Activated T-helper 2 cell treated with anti-CD3 and anti-CD28 coated beads, Interferon-gamma antibody, Interleukin-2, Interleukin-4, amounts not matched to agents 10 μg/mL and 5 μg/mL and 100 μg/mL, durations not matched to agents 14 hours and 24 hours and 36 hours (primary cell): ENCODE measurements at regions of chr10 and their contacts with region 1.

Region 1: GRCh38 chr10:33155720-33156638 is 178.5 kb downstream of the NRP1 start:
- DNase-seq: no peak
- H3K4me3 Mint-ChIP-seq: no peak overlapping the region
- H3K27ac Mint-ChIP-seq: peak overlapping the region; percentile 44
- H3K4me1 Mint-ChIP-seq: peaks cover 43% of the 10 kb centered on the region
- H3K27me3 Mint-ChIP-seq: no peaks in the 10 kb centered on the region

Region 2: DNA sequence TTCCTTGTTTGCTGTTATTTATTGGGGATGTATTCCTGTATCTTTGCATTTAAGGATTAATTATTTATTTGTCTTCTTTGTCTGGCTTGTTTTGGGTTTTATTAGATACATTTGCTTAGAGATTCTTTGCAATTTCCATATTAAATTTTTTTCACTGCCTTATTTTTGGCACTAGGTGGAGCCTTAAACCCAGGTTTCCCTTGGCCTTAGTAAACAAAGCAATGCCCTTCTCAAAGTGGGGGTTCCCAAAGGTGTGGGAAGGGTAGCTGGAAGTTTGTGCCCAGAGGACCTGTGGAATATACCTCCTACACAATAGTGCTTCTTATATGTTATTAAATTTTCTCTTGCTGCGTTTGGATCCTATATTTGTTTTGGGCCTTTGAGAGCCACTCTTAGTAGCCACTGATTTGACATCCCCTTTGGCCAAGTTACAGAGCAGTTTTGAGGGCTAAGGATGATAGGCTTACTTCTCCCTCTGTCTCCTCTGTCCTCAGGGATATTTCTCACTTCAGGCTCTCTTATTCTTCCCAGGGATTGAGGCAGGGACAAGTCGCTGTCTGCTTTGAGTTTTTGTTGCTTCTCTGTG is 360.3 kb before region 1 on chr10:
- intact Hi-C with region 1: loop called (anchors 2 kb)
- DNase-seq: no peak
- H3K4me3 Mint-ChIP-seq: no peak overlapping the region
- H3K27ac Mint-ChIP-seq: no peak overlapping the region
- H3K4me1 Mint-ChIP-seq: no peaks in the 10 kb centered on the region
- H3K27me3 Mint-ChIP-seq: peaks cover 7% of the 10 kb centered on the region

Region 3: DNA sequence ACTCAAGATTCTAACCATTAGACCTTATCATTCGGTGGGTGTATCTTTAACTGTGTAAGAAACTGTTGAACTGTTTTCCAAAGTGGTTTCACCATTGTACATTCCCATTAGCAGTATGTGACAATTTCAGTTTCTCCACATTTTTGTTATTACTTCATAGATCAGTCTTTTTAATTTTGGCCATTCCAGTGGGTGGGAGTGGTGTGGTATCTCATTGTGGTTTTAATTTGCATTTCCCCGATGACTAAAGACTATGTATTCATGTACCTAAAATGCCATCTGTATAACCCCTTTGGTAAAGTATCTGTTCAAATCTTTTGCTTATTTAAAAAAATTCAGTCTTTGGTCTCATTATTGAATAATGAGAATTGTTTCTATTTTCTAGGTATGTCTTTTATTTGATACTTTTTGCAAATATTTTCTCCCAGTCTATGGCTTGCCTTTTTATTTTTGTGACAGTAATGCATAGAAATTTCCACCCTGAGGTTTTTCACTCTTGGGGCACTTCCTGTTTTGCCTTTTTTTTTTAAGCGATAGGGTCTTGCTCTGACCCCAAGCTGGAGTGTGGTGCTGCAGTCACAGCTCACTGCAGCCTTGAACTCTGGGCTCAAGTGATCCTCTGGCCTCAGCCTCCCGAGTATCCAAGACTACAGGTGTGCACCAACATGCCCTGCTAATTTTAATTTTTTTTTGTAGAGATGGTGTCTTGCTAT is 56.9 kb before region 1 on chr10:
- intact Hi-C with region 1: loop called (anchors 5 kb)
- DNase-seq: no peak
- H3K4me3 Mint-ChIP-seq: no peak overlapping the region
- H3K27ac Mint-ChIP-seq: peak overlapping the region; percentile 86
- H3K4me1 Mint-ChIP-seq: peaks cover 28% of the 10 kb centered on the region
- H3K27me3 Mint-ChIP-seq: no peaks in the 10 kb centered on the region

Region 4: GRCh38 chr10:33134011-33134751 is 21.8 kb before region 1 on chr10:
- intact Hi-C with region 1: loop called (anchors 2 kb)
- DNase-seq: peak; percentile 64
- H3K4me3 Mint-ChIP-seq: peak overlapping the region; percentile 18
- H3K27ac Mint-ChIP-seq: peak overlapping the region; percentile 84
- H3K4me1 Mint-ChIP-seq: peaks cover 65% of the 10 kb centered on the region
- H3K27me3 Mint-ChIP-seq: no peaks in the 10 kb centered on the region

Region 5: GRCh38 chr10:33791267-33791650 is 635.3 kb after region 1 on chr10:
- intact Hi-C with region 1: no loop called
- DNase-seq: no peak
- H3K4me3 Mint-ChIP-seq: no peak overlapping the region
- H3K27ac Mint-ChIP-seq: no peak overlapping the region
- H3K4me1 Mint-ChIP-seq: no peaks in the 10 kb centered on the region
- H3K27me3 Mint-ChIP-seq: no peaks in the 10 kb centered on the region